Posterior vena cava (tissue), 2 donors: ENCODE measurements at regions of chr18 and their contacts with region 1.

Region 1: GRCh38 chr18:4308576-4308975 is 146.5 kb downstream of the DLGAP1 start:
- DNase-seq: no peak

Region 2: DNA sequence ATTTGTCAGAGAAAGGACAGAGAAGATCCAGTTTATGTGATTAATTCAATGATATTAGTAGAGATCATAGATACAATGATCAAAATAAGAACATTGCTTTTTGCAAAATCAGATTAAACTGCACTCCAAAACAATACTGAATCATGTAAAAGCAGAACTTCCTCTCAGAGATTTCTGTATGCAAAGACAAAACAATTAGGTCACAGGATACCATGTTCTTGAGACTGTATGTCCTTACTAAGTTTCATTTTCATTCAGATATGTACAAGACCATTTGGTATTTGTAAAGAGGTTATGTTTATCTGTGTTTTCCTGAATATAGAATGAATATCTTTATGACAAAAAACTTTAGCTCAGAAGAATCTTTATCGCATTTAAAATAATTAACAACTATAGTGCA is 15.2 kb before region 1 on chr18:
- intact Hi-C with region 1: no loop called
- DNase-seq: no peak

Region 3: GRCh38 chr18:4369705-4370104 is 61.1 kb after region 1 on chr18:
- intact Hi-C with region 1: no loop called
- DNase-seq: no peak

Region 4: DNA sequence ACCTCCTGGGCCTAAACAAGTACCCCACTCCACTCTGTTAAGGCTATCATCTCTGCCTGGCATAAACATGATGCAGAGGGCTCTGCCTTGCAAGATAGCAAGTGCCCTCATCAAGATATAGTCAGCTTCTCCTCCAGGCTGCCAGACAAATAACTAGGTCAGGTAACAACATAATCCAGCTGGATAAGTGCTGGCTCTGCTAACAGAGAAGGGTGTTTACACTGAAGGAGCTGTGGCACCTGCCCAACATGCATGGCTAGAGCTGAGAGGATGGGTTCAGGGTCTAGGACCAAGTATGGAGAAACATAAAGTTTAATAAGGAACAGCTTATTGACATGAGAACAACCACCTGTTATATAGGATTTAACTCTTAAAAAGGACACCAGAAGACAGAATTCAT is 103.7 kb after region 1 on chr18:
- intact Hi-C with region 1: loop called in 1 of 2 experiments (anchors 5 kb)
- DNase-seq: no peak